ENCODE measurements at regions of chr7 and their contacts with region 1.

Region 1: DNA sequence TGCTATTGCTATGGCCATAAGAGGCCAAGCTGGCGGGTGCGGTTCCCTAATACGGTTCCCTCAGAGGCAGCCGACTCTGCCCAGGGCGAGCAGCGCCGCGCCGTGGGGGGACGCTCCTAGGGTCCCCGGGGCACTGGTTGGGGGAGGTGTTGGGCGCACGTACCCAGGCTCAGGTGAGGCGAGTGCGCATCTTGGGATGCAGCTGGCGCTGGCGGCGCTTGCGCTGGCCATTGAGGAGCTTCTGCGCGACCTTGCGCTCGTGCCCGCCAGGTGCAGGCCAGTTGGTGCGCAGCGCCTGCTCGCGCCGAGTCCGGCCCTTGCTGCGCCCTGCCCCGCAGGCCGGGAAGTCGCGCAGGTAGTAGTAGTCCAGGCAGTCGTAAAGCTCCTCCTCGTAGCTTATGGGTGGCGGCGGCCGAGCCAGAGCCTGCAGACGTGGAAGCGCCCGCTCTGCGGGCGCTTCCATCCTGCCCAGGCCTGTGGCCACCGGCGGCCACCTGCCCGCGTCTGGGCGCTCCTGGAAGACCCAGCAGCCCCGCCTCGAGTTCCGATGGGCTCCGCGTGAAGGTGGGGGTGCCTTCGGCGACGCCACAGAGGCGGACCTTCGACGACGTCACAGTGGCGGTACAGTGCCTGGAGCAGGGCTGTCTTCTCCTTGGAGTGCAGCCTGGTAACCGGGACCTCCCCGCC is at the start of gene NUPR2:
- DNase-seq: no peak
- ATAC-seq: peak; percentile 50
- H3K4me3 ChIP-seq: peak within 1 kb of the TSS; percentile 7 to 33
- H3K27ac ChIP-seq: no peak within 1 kb of the TSS
- H3K4me1 ChIP-seq: no peaks in the 10 kb centered on the region
- H3K27me3 ChIP-seq: no peaks in the 10 kb centered on the region
- total RNA-seq, gene NUPR2: 0.62 to 1.1 TPM

Region 2: GRCh38 chr7:56174810-56175760 is 59.1 kb after region 1 on chr7:
- intact Hi-C with region 1: loop called (anchors 5 to 10 kb)
- DNase-seq: peak; percentile 79 to 91
- ATAC-seq: peak; percentile 71
- H3K4me3 ChIP-seq: peak overlapping the region; percentile 24 to 44
- H3K27ac ChIP-seq: no peak overlapping the region
- H3K4me1 ChIP-seq: no peaks in the 10 kb centered on the region
- H3K27me3 ChIP-seq: no peaks in the 10 kb centered on the region